Right ventricle myocardium inferior (tissue), 1 donor: ENCODE measurements at regions of chr10 and their contacts with region 1.

Region 1: GRCh38 chr10:96618653-96619052 is 31.8 kb upstream of the TM9SF3 start:
- DNase-seq: no peak
- ATAC-seq: peak; percentile 72

Region 2: DNA sequence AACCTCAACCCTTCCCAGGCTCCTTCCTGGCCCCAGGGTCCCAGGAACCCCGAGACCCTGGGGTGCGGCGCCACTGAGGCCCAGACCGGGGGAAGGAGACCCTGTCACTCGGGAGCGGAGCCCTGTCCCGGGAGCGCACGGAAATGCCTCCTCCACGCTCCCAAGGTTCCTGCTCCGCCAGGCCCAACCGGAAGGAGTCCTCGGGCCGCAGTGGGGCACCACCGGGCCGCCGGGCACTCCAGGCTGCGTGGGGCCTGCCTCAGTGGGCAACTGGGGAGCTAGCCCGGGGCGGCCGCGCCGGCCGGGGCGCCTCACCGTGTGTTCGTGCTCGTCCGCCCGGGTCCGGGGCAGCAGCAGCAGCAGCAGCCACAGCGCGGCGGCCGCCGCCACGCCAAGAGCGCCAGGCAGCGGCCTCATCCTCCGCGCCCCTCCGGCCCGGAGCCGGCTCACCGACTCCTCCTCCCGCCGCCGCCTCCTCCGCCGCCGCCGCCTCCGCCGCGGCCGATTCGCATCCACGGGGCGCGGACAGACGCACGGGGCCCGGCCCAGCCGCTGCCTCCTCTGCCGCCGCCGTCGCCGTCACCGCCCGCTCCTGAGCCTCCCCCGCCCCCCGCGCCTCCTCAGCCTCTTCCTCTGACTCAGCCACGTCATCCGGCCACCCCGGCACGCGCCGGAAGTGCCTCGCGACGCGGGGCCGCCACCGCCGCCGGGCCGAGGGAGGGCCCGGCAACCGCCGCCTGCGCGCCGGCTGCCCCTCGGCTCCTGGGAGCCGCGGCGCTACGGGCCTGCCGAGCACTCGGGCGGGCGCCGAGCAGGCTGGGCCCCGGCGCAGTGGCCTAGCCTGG is 32.0 kb before region 1 on chr10 and contains the start of gene TM9SF3:
- intact Hi-C with region 1: loop called (anchors 1 kb)
- DNase-seq: peak; percentile 98
- ATAC-seq: peak; percentile 92
- total RNA-seq, gene TM9SF3: 65.9 TPM

Region 3: DNA sequence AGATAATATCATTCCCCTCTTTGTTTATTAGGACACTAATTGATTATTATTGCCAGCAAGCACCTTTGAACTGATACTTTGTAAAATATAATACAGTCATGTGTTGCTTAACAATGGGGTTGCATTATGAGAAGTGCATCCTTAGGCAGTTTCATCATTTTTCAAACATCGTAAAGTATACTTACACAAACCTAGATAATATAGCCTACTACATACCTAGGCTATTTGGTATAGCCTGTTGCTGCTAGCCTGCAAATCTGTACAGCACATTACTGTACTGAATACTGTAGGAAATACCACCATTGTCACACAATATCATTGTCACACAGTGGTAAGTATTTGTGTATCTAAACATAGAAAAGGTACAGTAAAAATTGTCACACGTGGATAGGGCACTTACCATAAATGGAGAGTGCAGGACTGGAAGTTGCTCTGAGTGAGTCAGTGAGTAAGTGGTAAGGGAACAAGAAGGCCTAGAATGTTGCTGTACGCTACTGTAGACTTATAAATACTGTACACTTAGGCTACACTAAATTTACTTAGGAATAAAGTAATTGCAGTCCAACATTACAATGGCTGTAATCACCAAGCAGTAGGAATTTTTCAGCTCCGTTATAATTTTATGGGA is 284.2 kb after region 1 on chr10:
- intact Hi-C with region 1: no loop called
- DNase-seq: no peak
- ATAC-seq: no peak